MCF 10A (cell line): ENCODE measurements at regions of chr5 and their contacts with region 1.

Region 1: DNA sequence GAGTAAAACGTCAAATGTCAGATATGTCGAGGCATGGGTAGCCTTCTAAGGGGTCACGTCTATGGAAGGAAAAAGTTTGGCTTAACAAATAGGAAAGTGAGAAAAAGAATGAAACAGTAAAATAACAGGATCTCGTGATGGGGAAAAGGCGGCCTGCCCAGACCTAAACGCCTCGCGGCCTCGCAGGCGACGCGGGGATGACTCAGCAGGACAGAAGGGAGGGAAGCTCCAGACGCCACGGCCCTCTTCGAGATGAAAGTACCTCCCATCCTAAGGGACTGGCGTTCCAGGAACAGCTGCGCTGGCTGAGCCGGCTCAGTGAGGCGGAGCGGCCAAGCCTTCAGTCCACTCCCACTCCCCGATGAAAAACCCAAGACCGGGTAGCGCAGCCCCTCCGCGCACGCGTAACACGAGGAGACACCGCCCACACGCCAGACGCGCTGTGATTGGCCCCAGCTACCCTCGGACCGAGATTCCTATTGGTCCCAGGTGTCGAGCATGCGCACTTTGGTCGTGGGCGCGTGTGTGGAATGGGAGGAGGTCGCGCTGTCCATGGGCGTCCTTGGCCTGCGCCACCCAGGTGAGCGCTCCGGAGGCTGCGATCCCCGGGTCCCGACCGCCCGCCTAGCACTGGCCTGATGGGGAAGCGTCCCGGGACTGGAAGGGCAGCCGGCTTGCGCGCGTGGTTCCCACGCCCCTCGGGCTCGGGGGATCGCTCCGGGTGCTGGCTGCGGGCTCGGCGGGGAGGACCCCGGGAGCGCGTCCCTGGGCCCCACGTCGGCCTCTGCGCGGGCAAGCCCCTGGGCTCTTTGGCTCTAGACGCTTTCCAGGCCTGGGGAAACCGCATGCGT is 588.5 kb downstream of the MTRR start:
- DNase-seq: peak; percentile 98
- H3K4me3 Mint-ChIP-seq: peak overlapping the region; percentile 92
- H3K27ac Mint-ChIP-seq: peak overlapping the region; percentile 83
- H3K4me1 Mint-ChIP-seq: peaks cover 14% of the 10 kb centered on the region
- H3K27me3 Mint-ChIP-seq: no peaks in the 10 kb centered on the region
- CTCF ChIP-seq: no peak

Region 2: DNA sequence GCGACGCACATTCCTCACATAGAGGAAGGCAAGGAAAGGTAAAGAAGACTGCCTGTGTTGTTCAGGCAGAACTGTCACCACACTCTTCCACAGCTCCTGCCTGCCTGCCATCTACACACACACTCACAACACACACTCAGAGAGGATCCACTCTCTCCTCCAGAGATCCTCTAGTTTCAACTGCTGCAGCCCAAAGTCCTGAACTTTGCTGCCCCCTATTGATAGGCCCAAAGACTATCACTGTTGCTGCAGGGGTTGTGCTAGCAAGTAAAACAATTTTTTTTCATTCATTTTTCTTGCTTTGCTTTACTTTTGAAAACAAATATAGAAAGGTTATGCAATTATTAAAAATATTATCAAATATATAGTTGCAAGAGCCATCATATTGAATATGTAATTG is 600.6 kb before region 1 on chr5:
- CTCF ChIA-PET with region 1: no interaction called
- POLR2A ChIA-PET with region 1: no interaction called
- intact Hi-C with region 1: no loop called
- DNase-seq: peak; percentile 48
- H3K4me3 Mint-ChIP-seq: no peak overlapping the region
- H3K27ac Mint-ChIP-seq: no peak overlapping the region
- H3K4me1 Mint-ChIP-seq: no peaks in the 10 kb centered on the region
- H3K27me3 Mint-ChIP-seq: no peaks in the 10 kb centered on the region
- CTCF ChIP-seq: peak; percentile 44

Region 3: DNA sequence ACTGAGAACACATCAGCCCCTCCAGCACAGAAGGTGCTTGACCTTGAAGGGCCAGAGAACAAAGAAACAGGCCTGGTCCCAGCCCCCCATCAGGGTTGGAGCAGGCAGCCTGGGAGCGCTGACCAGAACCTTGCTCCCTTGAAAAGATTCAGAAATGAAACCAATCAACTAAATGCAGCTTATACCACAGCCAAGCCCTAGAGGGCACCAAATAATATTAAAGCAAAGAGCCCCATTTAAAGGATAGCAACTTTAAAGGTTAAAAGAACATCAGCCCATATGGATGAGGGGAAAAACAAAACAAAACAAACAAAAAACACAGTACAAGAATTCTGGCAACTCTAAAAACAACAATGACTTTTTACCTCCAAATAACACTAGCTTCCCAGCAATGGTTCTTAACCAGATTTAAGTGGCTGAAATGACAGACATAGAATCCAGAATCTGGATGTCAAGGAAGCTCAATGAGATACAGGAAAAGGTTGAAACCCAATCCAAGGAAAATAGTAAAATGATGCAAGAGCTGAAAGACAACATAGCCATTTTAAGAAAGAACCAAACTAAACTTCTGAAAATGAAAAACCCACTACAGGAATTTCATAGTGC is 116.6 kb before region 1 on chr5:
- CTCF ChIA-PET with region 1: interaction called, 3 read pairs
- POLR2A ChIA-PET with region 1: interaction called, 10 read pairs
- intact Hi-C with region 1: loop called (anchors 5 kb)
- DNase-seq: peak; percentile 22
- H3K4me3 Mint-ChIP-seq: peak overlapping the region; percentile 38
- H3K27ac Mint-ChIP-seq: no peak overlapping the region
- H3K4me1 Mint-ChIP-seq: peaks cover 9% of the 10 kb centered on the region
- H3K27me3 Mint-ChIP-seq: no peaks in the 10 kb centered on the region
- CTCF ChIP-seq: peak; percentile 54